GM13977 (cell line): ENCODE measurements at regions of chr3 and their contacts with region 1.

Region 1: DNA sequence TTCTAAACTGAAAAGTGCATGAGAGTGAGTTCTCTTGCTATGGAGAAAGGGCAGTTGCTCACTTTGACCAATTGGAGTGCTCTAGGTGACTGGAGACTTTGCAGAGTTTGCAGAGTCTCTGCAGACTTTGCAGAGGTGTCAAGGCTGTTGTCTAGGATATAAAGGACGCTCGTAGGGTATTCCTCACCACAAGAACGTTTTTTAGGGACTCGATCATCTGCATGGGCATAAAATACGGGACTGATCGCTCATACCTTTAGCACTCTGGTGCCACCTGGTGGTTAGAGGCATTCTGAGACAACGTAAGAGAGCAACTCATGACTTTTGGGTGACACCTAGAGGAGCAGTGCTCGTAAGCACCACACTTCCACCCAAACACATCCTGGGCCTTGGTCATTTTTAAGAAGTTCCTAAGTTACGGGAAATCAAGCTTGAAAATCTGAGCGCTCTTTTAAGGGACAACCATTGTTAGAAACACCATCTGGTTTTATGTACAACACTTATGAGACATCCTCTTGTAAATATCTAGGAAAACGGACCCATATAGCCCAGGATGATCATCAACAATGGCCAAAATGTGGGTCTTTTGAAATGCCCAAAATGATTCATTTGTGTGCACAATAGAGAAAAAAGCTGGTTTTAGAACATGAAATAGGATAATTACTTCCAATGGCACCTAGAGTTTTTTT is 51.6 kb upstream of the XCR1 start:
- DNase-seq: peak; percentile 67
- CTCF ChIP-seq: peak; percentile 99

Region 2: DNA sequence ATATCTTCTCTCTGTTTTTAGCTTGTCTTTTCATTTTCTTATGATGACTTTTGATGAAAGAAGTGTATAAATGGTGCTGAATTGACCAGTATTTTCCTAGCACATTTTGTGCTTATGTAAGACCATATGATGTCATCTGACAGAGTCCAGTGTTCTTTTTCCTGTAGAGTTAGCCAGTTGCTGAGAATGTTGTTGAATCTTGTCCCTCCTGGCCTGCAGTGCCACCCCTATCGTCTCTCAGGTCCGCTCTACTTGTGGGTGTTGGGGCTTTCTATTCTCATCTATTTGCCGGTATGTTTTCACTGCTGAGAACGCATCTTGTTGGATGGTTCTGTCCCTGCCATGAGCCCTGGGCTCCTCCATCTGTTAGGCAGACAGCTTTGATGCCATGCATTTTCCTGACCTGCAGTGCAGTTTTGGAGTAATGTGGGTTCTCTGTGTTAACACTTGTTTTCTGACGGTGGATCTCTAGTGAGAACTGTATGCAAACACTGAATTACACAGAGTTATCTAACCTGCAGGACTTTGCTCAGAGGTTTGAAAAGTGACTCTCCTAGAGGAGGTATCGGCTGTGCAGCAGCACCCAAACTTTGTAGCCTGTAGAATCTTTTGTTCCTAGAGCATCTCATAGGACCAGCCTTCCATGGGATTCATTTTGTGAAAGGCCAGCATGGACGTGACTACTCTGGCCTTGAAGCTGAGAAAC is 327.2 kb before region 1 on chr3:
- in situ Hi-C with region 1: loop called (anchors 10 kb)
- DNase-seq: no peak
- CTCF ChIP-seq: no peak

Region 3: DNA sequence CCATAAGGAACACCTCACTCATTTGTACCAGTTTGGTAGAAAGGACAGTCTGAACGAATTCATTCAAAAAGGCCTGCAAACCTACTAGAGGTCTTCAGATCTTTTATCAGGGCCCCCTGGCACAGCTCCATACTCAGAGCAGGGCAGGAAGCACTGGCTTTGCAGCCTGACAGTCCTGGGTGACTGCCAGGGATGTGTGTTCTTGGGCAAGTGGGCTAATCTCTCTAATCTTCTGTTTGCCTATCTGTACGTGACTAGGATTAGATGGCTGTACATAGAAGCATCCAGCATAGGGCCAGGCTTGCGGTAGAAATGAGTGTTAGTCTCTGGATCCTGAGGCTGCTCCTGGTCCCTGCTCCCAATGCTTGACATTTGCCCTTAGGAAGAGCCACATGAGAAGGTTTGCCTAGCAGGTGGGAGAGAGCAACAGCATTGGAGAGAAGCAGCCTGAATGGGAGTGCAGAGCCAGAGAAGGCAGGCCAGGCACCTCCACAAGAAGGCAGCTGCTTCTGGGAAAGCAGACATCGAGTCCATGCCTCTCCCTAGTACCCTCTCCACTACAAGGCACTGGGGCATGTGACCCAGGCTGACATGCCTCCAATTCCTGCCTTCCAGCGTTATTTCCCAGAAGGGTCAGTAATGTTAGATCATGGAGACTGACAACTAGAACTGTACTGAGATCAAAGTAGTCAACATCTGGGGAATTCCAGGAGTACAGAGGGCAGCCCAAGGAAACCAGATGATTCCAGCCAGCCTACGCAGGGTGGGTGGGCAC is 136.6 kb before region 1 on chr3:
- in situ Hi-C with region 1: loop called (anchors 5 kb)
- DNase-seq: no peak
- CTCF ChIP-seq: no peak